ENCODE measurements at regions of chr1 and their contacts with region 1.

Region 1: GRCh38 chr1:115496904-115497527 is 144.8 kb upstream of the VANGL1 start:
- DNase-seq: peak; percentile 66 to 95
- H3K4me3 ChIP-seq: peak overlapping the region; percentile 19; the same call in 1 of the 2 replicates
- H3K27ac ChIP-seq: peak overlapping the region; percentile 85
- H3K4me1 ChIP-seq: peaks cover 68% of the 10 kb centered on the region
- H3K27me3 ChIP-seq: no peaks in the 10 kb centered on the region
- CTCF ChIP-seq: no peak

Region 2: GRCh38 chr1:115545791-115546733 is 49.0 kb after region 1 on chr1:
- CTCF ChIA-PET with region 1: interaction called, 4 read pairs
- POLR2A ChIA-PET with region 1: interaction called, 3 read pairs
- intact Hi-C with region 1: loop called (anchors 1 kb)
- DNase-seq: peak; percentile 92 to 99
- H3K4me3 ChIP-seq: peak overlapping the region; percentile 9; the same call in 1 of the 2 replicates
- H3K27ac ChIP-seq: peak overlapping the region; percentile 91
- H3K4me1 ChIP-seq: peaks cover 35% of the 10 kb centered on the region
- H3K27me3 ChIP-seq: no peaks in the 10 kb centered on the region
- CTCF ChIP-seq: peak; percentile 82

Region 3: GRCh38 chr1:116504308-116505156 is 1007.5 kb after region 1 on chr1:
- CTCF ChIA-PET with region 1: no interaction called
- POLR2A ChIA-PET with region 1: no interaction called
- intact Hi-C with region 1: loop called (anchors 5 kb)
- DNase-seq: peak; percentile 67 to 92
- H3K4me3 ChIP-seq: no peak overlapping the region
- H3K27ac ChIP-seq: peak overlapping the region; percentile 86
- H3K4me1 ChIP-seq: peaks cover 67% of the 10 kb centered on the region
- H3K27me3 ChIP-seq: no peaks in the 10 kb centered on the region
- CTCF ChIP-seq: no peak